Activated naive CD4-positive, alpha-beta T cell treated with anti-CD3 and anti-CD28 coated beads, Interleukin-2, amount 10 ng/mL, durations not matched to agents 7 days and 5 days (primary cell): ENCODE measurements at regions of chr7 and their contacts with region 1.

Region 1: GRCh38 chr7:87416682-87417587 is 58.5 kb downstream of the ABCB4 start:
- DNase-seq: peak; percentile 77
- H3K4me3 Mint-ChIP-seq: no peak overlapping the region
- H3K27ac Mint-ChIP-seq: no peak overlapping the region
- H3K4me1 Mint-ChIP-seq: no peaks in the 10 kb centered on the region
- H3K27me3 Mint-ChIP-seq: peaks cover 8% of the 10 kb centered on the region

Region 2: GRCh38 chr7:87312215-87312865 is 104.6 kb before region 1 on chr7:
- CTCF ChIA-PET with region 1: interaction called, 28 read pairs
- DNase-seq: peak; percentile 49
- H3K4me3 Mint-ChIP-seq: no peak overlapping the region
- H3K27ac Mint-ChIP-seq: no peak overlapping the region
- H3K4me1 Mint-ChIP-seq: no peaks in the 10 kb centered on the region
- H3K27me3 Mint-ChIP-seq: no peaks in the 10 kb centered on the region